ENCODE measurements at regions of chr1 and their contacts with region 1.

Region 1: DNA sequence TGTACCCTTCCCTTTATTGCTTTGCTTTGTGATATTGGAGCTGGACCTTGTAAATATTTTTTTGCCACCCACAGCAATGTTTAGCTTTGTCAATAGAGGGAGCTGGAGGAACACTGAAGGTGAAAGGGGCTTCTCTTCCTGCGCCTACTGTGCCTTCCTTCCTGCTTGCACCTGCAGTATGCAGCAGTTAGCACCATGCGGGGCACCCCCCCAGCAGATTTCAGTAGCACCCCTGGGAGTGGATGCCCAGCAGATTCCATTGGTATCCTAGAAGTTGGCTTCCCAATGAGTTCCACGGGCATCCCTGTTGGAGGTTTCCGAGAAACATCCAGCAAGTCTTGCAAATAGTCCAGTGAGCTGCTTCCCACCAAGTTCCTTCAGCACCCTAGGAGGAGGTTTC is 25.6 kb downstream of the S100A10 start:
- DNase-seq: peak; percentile 80
- ATAC-seq: peak; percentile 97
- H3K4me3 Mint-ChIP-seq: no peak overlapping the region
- H3K27ac Mint-ChIP-seq: peak overlapping the region; percentile 22
- H3K4me1 Mint-ChIP-seq: peaks cover 23% of the 10 kb centered on the region
- H3K27me3 Mint-ChIP-seq: peaks cover 7% of the 10 kb centered on the region

Region 2: DNA sequence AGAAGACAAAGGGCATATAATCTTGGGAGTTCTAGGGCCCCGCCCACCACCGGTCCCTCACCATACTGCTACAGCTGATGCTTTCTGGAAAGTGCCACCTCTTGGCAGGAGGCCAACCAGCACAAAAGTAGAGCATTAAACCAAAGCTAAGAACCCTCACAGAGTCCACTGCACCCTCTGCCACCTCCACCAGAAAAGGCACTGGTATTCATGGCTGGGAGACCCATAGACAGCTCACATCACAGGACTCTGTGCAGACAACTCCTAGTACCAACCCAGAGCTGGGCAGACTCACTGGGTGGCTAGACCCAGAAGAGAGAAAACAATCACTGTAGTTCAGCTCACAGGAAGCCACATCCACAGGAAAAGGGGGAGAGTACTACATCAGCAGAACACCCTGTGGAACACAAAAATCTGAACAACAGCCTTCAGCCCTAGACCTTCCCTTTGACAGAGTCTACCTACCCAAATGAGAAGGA is 69.5 kb before region 1 on chr1:
- CTCF ChIA-PET with region 1: interaction called, 10 read pairs
- POLR2A ChIA-PET with region 1: no interaction called
- DNase-seq: peak; percentile 70
- ATAC-seq: peak; percentile 88
- H3K4me3 Mint-ChIP-seq: peak overlapping the region; percentile 62
- H3K27ac Mint-ChIP-seq: peak overlapping the region; percentile 90
- H3K4me1 Mint-ChIP-seq: peaks cover 58% of the 10 kb centered on the region
- H3K27me3 Mint-ChIP-seq: no peaks in the 10 kb centered on the region

Region 3: GRCh38 chr1:151939779-151940178 is 28.3 kb before region 1 on chr1:
- CTCF ChIA-PET with region 1: interaction called, 48 read pairs
- POLR2A ChIA-PET with region 1: no interaction called
- DNase-seq: no peak
- ATAC-seq: no peak
- H3K4me3 Mint-ChIP-seq: no peak overlapping the region
- H3K27ac Mint-ChIP-seq: no peak overlapping the region
- H3K4me1 Mint-ChIP-seq: peaks cover 6% of the 10 kb centered on the region
- H3K27me3 Mint-ChIP-seq: peaks cover 13% of the 10 kb centered on the region

Region 4: DNA sequence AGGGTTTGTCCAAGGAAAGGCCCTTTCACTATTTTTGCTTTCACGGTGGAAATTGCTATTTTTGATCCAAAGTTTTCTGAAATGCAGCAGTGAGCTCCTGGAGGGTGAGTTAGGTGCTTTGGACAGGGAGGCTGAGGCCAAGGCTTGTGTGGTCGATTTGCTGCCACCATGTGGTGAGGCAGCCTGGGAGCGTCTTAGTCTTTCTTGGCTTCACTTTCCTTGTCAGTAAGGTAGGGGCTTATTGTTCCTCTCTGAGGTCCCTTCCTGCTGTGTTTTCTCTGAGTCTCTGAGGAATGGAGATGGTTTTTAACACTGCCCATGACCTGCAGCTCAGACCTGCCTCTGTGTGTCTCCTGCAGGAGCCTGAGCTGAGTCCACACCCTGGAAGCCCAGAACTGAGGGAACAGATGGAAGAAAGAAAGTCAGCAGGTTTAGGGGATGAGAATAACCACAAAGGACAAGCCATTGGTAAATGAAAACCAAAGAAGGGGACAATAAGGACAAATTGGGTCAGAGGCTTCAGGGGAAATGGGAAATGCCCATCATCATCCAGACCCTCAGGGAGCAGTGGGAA is 45.7 kb after region 1 on chr1:
- CTCF ChIA-PET with region 1: interaction called, 31 read pairs
- POLR2A ChIA-PET with region 1: no interaction called
- DNase-seq: peak; percentile 69
- ATAC-seq: no peak
- H3K4me3 Mint-ChIP-seq: no peak overlapping the region
- H3K27ac Mint-ChIP-seq: no peak overlapping the region
- H3K4me1 Mint-ChIP-seq: peaks cover 5% of the 10 kb centered on the region
- H3K27me3 Mint-ChIP-seq: peaks cover 29% of the 10 kb centered on the region

Region 5: GRCh38 chr1:152941021-152941711 is 973.1 kb after region 1 on chr1:
- CTCF ChIA-PET with region 1: no interaction called
- POLR2A ChIA-PET with region 1: no interaction called
- DNase-seq: no peak
- ATAC-seq: no peak
- H3K4me3 Mint-ChIP-seq: no peak overlapping the region
- H3K27ac Mint-ChIP-seq: no peak overlapping the region
- H3K4me1 Mint-ChIP-seq: no peaks in the 10 kb centered on the region
- H3K27me3 Mint-ChIP-seq: no peaks in the 10 kb centered on the region

Measured in activated CD8-positive, alpha-beta T cell treated with anti-CD3 and anti-CD28 coated beads, Interleukin-2, amount 10 ng/mL, durations not matched to agents 7 days and 5 days (primary cell).